ENCODE measurements at regions of chr2 and their contacts with region 1.

Region 1: DNA sequence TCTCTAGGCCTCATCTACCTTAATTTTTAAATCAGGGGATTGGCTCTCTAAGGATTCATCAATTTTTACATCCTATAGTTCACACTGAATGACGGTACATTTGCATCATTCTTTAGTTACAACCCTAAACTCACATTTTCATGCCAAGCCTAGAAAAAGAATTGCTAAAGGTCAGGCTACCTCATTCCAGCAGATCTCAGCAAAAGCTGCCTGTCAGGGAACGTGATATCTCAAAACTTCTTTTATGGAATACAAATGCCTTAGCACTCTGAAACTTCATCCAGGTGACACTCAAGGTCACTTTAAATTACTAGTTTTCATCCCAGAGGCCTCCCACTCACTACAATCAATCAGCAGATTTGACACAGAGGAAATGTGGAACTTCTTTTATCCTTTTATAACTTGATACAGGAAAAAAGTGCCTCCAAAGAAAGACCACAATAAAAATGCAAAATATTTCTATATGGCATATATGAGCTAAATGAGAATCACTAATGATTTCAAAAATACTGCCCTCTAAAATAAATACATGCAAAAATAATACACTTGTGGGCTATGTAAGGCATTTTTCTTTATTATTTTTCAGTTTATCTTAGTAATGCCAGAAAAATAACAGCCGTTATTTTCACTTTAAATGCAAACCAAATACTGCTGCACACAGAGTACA is 91.5 kb downstream of the ARHGEF33 start:
- DNase-seq: no peak
- ATAC-seq: no peak
- H3K4me3 ChIP-seq: no peak overlapping the region
- H3K27ac ChIP-seq: no peak overlapping the region
- H3K4me1 ChIP-seq: no peaks in the 10 kb centered on the region
- H3K27me3 ChIP-seq: no peaks in the 10 kb centered on the region
- CTCF ChIP-seq: no peak
- POLR2A ChIP-seq: no peak

Region 2: GRCh38 chr2:39000552-39000951 is 19.4 kb after region 1 on chr2:
- in situ Hi-C with region 1: no loop called
- intact Hi-C with region 1: loop called (anchors 2 kb)
- DNase-seq: no peak
- ATAC-seq: no peak
- H3K4me3 ChIP-seq: no peak overlapping the region
- H3K27ac ChIP-seq: no peak overlapping the region
- H3K4me1 ChIP-seq: no peaks in the 10 kb centered on the region
- H3K27me3 ChIP-seq: no peaks in the 10 kb centered on the region
- CTCF ChIP-seq: no peak
- POLR2A ChIP-seq: no peak

Region 3: DNA sequence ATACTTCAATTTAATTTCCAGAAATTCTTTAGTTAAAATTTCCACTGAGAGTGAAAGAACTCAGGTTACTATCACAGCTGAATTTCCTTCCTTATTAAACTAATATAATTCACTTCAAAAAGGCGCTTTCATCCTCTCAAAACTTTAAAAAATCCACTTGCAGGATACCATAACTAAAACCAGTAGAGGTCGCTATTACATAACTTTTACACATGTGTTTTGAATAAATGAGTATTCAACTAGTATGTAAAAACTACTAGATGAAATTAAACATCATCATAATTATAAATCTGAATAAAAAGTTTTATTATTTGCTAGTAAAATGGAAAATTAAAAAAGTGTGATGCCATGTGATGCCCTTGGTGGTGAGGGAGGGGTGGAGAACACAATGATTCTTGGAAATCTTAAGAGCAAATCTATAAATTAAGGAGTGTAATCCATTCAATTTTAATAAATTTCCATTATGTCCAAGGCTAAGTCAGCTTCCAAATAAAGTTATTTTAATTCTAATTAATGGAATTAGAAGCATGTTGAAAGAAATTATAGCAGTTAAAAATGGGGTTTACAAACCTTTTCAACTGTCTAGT is 78.3 kb after region 1 on chr2:
- in situ Hi-C with region 1: no loop called
- intact Hi-C with region 1: no loop called
- DNase-seq: no peak
- ATAC-seq: no peak
- H3K4me3 ChIP-seq: no peak overlapping the region
- H3K27ac ChIP-seq: peak overlapping the region in 1 of 4 donors; percentile 34
- H3K4me1 ChIP-seq: peaks cover 0 to 7% of the 10 kb centered on the region in 2 donors
- H3K27me3 ChIP-seq: no peaks in the 10 kb centered on the region
- CTCF ChIP-seq: peak; percentile 52 to 80 (median 75)
- POLR2A ChIP-seq: no peak

Measured in gastrocnemius medialis (tissue), 4 donors.